Esophagus muscularis mucosa (tissue), 4 donors: ENCODE measurements at regions of chr4 and their contacts with region 1.

Region 1: GRCh38 chr4:113394730-113395530 is 345.5 kb downstream of the ANK2 start:
- DNase-seq: no peak
- H3K4me3 ChIP-seq: no peak overlapping the region
- H3K27ac ChIP-seq: peak overlapping the region in 2 of 4 donors; percentile 3 to 48
- H3K4me1 ChIP-seq: peaks cover 0 to 23% (median 16%) of the 10 kb centered on the region in 4 donors
- H3K27me3 ChIP-seq: no peaks in the 10 kb centered on the region
- CTCF ChIP-seq: peak; percentile 86 to 91 (median 87)
- EP300 ChIP-seq: no peak
- POLR2A ChIP-seq: no peak

Region 2: GRCh38 chr4:113474017-113474416 is 79.1 kb after region 1 on chr4:
- intact Hi-C with region 1: loop called (anchors 5 kb)
- DNase-seq: no peak
- H3K4me3 ChIP-seq: no peak overlapping the region
- H3K27ac ChIP-seq: no peak overlapping the region
- H3K4me1 ChIP-seq: peaks cover 12 to 30% (median 13%) of the 10 kb centered on the region in 4 donors
- H3K27me3 ChIP-seq: no peaks in the 10 kb centered on the region
- CTCF ChIP-seq: no peak
- EP300 ChIP-seq: no peak
- POLR2A ChIP-seq: no peak

Region 3: DNA sequence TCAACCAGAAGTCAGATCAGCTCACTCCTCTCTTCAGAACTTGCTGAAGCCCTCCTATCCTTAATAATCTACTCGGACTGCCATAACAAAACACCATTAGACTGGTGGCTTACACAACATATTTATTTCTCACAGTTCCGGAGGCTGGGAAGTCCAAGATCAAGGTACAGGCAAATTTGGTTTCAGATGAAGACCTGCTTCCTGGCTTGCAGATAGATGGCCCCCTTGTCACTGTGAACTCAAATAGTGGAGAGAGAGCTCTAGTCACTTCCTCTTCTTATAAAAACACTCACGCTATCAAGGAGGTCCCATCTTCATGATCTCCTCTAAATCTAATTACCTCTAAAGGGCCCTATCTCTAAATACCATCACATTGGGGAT is 241.5 kb after region 1 on chr4:
- intact Hi-C with region 1: no loop called
- DNase-seq: no peak
- H3K4me3 ChIP-seq: no peak overlapping the region
- H3K27ac ChIP-seq: no peak overlapping the region
- H3K4me1 ChIP-seq: peaks cover 48 to 71% (median 50%) of the 10 kb centered on the region in 4 donors
- H3K27me3 ChIP-seq: no peaks in the 10 kb centered on the region
- CTCF ChIP-seq: no peak
- EP300 ChIP-seq: no peak
- POLR2A ChIP-seq: no peak

Region 4: DNA sequence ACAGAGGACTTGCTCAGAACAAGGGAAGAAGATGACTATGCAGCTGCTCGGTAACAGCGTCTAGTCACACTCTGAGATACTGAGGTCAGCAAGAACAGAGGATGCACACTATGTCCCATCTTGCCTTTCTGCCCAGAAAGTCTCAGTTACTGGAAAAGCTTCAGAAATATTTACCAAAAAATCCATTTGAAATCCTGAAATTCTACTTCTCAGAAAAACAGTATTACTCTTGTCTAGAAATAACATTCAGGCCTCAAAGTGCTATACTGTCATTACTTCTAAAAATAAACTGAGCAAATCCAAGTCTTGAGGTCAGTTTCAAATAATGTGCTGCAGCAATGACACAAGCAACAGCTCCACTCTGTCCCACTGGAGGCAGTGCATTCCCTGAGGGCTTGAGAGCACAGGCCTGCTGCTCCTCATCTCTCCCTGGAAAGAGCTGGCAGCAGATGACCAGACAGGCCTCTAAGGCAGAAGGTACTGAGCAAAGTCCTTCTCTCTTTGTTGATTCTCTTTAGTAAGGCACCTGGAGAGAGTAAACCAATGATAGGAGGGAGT is 289.7 kb after region 1 on chr4:
- intact Hi-C with region 1: loop called (anchors 10 kb)
- DNase-seq: no peak
- H3K4me3 ChIP-seq: no peak overlapping the region
- H3K27ac ChIP-seq: peak overlapping the region; percentile 50 to 72 (median 60)
- H3K4me1 ChIP-seq: peaks cover 35 to 45% (median 37%) of the 10 kb centered on the region in 4 donors
- H3K27me3 ChIP-seq: no peaks in the 10 kb centered on the region
- CTCF ChIP-seq: peak; percentile 33 to 60 (median 34)
- EP300 ChIP-seq: peak; percentile 88
- POLR2A ChIP-seq: no peak

Region 5: DNA sequence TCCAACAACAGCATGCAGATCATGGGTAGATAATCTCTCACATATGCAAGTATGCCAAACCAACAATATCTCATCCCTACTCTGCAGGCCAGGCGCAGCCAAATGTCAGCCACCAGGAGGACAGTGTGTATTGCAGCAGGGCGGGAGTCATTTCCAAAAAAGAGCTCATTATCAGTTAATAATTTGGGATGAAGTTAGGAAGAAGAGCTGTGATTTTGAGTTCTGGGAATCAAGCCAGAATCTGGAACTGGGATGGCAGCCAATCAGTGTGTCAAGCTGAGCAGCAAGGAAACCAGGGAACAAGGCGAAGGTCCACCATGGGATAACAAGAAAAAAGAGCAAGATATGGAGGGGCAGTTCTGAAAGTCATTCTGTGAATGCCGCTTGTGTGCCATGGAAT is 454.8 kb after region 1 on chr4:
- intact Hi-C with region 1: no loop called
- DNase-seq: no peak
- H3K4me3 ChIP-seq: no peak overlapping the region
- H3K27ac ChIP-seq: no peak overlapping the region
- H3K4me1 ChIP-seq: peaks cover 0 to 6% (median 5%) of the 10 kb centered on the region in 4 donors
- H3K27me3 ChIP-seq: no peaks in the 10 kb centered on the region
- CTCF ChIP-seq: no peak
- EP300 ChIP-seq: no peak
- POLR2A ChIP-seq: no peak

Region 6: DNA sequence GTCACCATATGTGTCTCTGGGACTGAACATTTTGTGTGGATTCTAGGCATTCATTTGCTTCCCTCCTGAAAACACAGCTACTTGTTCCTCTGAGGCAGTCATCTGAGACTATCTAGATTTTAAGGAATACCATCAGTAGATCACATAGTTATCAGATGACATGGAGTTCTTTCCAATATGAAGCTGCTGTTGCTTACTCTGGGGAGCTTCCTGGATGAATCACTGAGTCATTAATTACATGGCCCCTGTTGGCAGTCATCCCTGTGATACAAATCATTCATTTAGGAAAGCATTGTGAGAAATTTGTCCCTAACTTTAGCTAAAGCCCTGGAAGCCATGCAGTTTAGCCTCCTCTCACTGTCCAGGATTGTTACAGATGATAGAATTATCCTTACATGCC is 682.7 kb after region 1 on chr4:
- intact Hi-C with region 1: loop called (anchors 5 kb)
- DNase-seq: no peak
- H3K4me3 ChIP-seq: no peak overlapping the region
- H3K27ac ChIP-seq: no peak overlapping the region
- H3K4me1 ChIP-seq: peaks cover 0 to 6% (median 0%) of the 10 kb centered on the region in 4 donors
- H3K27me3 ChIP-seq: no peaks in the 10 kb centered on the region
- CTCF ChIP-seq: no peak
- EP300 ChIP-seq: no peak
- POLR2A ChIP-seq: no peak